HEK293T (cell line): ENCODE measurements at regions of chr19 and their contacts with region 1.

Region 1: GRCh38 chr19:54115109-54116063 is at the starts of genes PRPF31 and TFPT:
- DNase-seq: peak; percentile 94

Region 2: GRCh38 chr19:54073829-54074228 is 41.6 kb before region 1 on chr19:
- CTCF ChIA-PET with region 1: no interaction called
- POLR2A ChIA-PET with region 1: no interaction called
- DNase-seq: no peak

Region 3: GRCh38 chr19:54102421-54103169 is 12.8 kb before region 1 on chr19 and contains the start of gene NDUFA3:
- CTCF ChIA-PET with region 1: no interaction called
- POLR2A ChIA-PET with region 1: interaction called, 28 read pairs
- DNase-seq: peak; percentile 100

Region 4: GRCh38 chr19:54137086-54137921 is 21.9 kb after region 1 on chr19 and contains the start of gene CNOT3:
- CTCF ChIA-PET with region 1: no interaction called
- POLR2A ChIA-PET with region 1: interaction called, 14 read pairs
- DNase-seq: peak; percentile 96